Gastrocnemius medialis (tissue), 4 donors: ENCODE measurements at regions of chr14 and their contacts with region 1.

Region 1: DNA sequence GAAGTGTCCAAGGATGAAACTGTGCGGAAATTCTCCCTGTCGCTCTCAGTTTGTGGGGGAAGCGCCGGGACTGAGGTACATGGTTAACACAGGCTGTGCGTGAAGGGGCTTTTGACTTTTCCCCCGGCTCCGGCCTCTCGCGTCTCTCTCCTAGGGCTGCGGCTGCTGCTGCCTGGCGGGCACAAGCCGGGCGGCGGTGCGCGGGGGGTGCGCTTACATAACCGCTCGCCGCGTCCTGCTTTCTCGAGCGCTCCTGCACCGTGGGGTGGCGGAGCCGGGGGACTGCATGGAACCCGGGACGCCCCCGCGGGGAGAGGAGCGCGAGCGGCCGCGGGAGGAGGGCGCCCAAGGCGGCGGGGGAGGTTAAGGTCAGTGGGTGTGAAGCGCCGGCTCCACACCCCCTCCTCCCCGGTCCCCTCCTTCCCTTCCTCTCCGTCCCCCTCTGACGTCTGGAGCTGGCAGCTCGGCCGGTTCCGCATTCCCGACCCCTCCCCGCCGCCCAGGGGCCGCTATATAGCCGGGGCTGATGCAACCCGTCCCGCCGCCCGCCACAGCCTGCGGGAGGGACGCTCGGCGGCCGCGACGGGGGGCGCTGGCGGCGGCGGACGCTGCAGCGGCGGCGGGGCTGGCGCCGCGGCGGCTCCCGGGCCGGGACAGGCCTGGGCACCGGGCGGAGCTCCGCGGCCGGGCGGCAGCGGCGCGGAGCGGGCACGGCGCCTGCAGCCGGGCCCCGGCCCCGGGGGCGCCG is at the start of gene JDP2:
- DNase-seq: peak; percentile 90 to 92
- ATAC-seq: peak; percentile 67 to 73
- H3K4me3 ChIP-seq: peak within 1 kb of the TSS; percentile 73 to 92 (median 88)
- H3K27ac ChIP-seq: peak within 1 kb of the TSS; percentile 88 to 96 (median 96)
- H3K4me1 ChIP-seq: peaks cover 54 to 64% of the 10 kb centered on the region in 2 donors
- H3K27me3 ChIP-seq: no peaks in the 10 kb centered on the region
- CTCF ChIP-seq: peak in 3 of 5 experiments; percentile 19 to 38 (median 32)
- POLR2A ChIP-seq: peak; percentile 74 to 90
- total RNA-seq, gene JDP2: 17.3 to 80.2 (median 31.7) TPM

Region 2: GRCh38 chr14:74671789-74672188 is 755.9 kb before region 1 on chr14:
- in situ Hi-C with region 1: no loop called
- intact Hi-C with region 1: no loop called
- DNase-seq: peak in 1 of 2 donors; percentile 26
- ATAC-seq: peak; percentile 93 to 95
- H3K4me3 ChIP-seq: no peak overlapping the region
- H3K27ac ChIP-seq: peak overlapping the region in 2 of 4 donors; percentile 60 to 62
- H3K4me1 ChIP-seq: peaks cover 8% of the 10 kb centered on the region in 2 donors
- H3K27me3 ChIP-seq: no peaks in the 10 kb centered on the region
- CTCF ChIP-seq: no peak
- POLR2A ChIP-seq: no peak

Region 3: GRCh38 chr14:75340921-75341320 is 86.7 kb before region 1 on chr14:
- in situ Hi-C with region 1: no loop called
- intact Hi-C with region 1: loop called (anchors 5 kb)
- DNase-seq: peak; percentile 97 to 100
- ATAC-seq: peak; percentile 96 to 97
- H3K4me3 ChIP-seq: peak overlapping the region; percentile 33 to 42 (median 36)
- H3K27ac ChIP-seq: peak overlapping the region; percentile 94 to 97 (median 94)
- H3K4me1 ChIP-seq: peaks cover 40 to 42% of the 10 kb centered on the region in 2 donors
- H3K27me3 ChIP-seq: no peaks in the 10 kb centered on the region
- CTCF ChIP-seq: peak in 1 of 5 experiments; percentile 37
- POLR2A ChIP-seq: peak; percentile 84 to 93

Region 4: GRCh38 chr14:75399821-75400678 is 27.6 kb before region 1 on chr14:
- in situ Hi-C with region 1: no loop called
- intact Hi-C with region 1: loop called (anchors 2 kb)
- DNase-seq: peak; percentile 94 to 98
- ATAC-seq: peak; percentile 90 to 93
- H3K4me3 ChIP-seq: no peak overlapping the region
- H3K27ac ChIP-seq: peak overlapping the region; percentile 82 to 89 (median 84)
- H3K4me1 ChIP-seq: peaks cover 25 to 29% of the 10 kb centered on the region in 2 donors
- H3K27me3 ChIP-seq: no peaks in the 10 kb centered on the region
- CTCF ChIP-seq: no peak
- POLR2A ChIP-seq: no peak

Region 5: DNA sequence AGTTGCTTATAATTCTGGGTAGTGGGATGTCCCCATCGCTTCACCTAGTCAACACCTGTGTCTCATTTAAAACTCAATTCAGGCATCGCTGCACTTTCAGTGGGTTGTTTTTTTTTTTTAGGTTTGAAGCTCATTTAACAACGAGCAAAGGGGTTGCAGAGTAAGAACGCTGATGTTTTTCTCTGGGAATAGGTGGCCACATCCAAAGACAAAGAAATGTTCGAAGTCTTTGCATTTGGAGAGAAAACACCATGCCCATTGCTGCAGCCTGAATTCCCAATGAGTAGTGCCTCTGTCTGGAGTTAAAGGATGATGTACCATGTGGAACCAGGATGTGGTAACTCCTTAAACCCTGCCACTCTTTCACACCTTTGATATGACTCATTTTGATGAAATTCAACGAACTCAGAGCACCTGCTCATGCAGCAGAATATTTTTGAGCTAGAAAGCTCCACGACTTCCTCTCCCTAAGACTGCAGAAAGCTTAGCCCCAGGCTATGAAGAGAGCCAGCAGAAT is 59.6 kb after region 1 on chr14:
- in situ Hi-C with region 1: no loop called
- intact Hi-C with region 1: loop called (anchors 1 kb)
- DNase-seq: no peak
- ATAC-seq: no peak
- H3K4me3 ChIP-seq: no peak overlapping the region
- H3K27ac ChIP-seq: no peak overlapping the region
- H3K4me1 ChIP-seq: peaks cover 0 to 6% of the 10 kb centered on the region in 2 donors
- H3K27me3 ChIP-seq: no peaks in the 10 kb centered on the region
- CTCF ChIP-seq: no peak
- POLR2A ChIP-seq: no peak

Region 6: GRCh38 chr14:75560962-75561432 is 133.3 kb after region 1 on chr14:
- in situ Hi-C with region 1: no loop called
- intact Hi-C with region 1: loop called (anchors 5 kb)
- DNase-seq: peak; percentile 83 to 92
- ATAC-seq: peak; percentile 71 to 77
- H3K4me3 ChIP-seq: no peak overlapping the region
- H3K27ac ChIP-seq: peak overlapping the region; percentile 73 to 89 (median 80)
- H3K4me1 ChIP-seq: peaks cover 40 to 52% of the 10 kb centered on the region in 2 donors
- H3K27me3 ChIP-seq: no peaks in the 10 kb centered on the region
- CTCF ChIP-seq: peak; percentile 79 to 87 (median 85)
- POLR2A ChIP-seq: no peak

Region 7: GRCh38 chr14:75648066-75648838 is 220.6 kb after region 1 on chr14:
- in situ Hi-C with region 1: no loop called
- intact Hi-C with region 1: loop called (anchors 10 kb)
- DNase-seq: peak; percentile 79 to 90
- ATAC-seq: peak; percentile 90 to 97
- H3K4me3 ChIP-seq: no peak overlapping the region
- H3K27ac ChIP-seq: peak overlapping the region; percentile 79 to 88 (median 83)
- H3K4me1 ChIP-seq: peaks cover 34 to 38% of the 10 kb centered on the region in 2 donors
- H3K27me3 ChIP-seq: no peaks in the 10 kb centered on the region
- CTCF ChIP-seq: no peak
- POLR2A ChIP-seq: no peak